ENCODE measurements at regions of chr20 and their contacts with region 1.

Region 1: DNA sequence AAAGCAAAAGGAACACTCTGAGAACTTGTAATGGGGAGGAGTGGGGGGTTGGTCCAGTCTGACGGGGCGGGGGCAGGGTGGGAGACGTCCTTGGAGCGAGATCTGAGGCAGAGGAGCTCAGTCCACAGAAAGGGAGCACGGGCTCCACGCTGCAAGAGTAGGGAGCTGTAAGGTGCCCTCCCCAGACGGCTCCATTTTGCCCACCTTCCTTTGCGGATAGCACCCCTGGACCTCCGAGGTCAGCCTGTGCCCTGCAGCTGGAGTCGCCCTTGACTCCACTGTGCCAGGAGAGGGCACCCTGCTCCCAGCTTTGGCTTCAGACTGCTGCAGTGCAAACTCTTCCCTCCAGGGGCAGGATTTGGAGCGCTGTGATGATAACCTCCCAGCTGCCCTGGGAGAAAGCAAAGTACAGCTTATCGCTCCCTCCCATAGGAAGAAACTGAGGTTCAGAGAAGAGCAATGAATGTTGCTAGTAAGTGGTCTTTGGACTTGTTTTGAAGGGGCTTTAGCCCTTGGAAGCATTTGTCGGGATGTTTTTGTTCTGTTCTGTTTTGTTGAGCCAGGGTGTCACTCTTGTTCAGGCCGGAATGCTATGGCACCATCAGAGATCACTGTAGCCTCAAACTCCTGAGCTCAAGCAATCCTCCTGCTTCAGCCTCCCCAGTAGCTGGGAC is 9.5 kb upstream of the AHCY start:
- DNase-seq: peak; percentile 91
- H3K4me3 Mint-ChIP-seq: peak overlapping the region; percentile 17
- H3K27ac Mint-ChIP-seq: no peak overlapping the region
- H3K4me1 Mint-ChIP-seq: peaks cover 17% of the 10 kb centered on the region
- H3K27me3 Mint-ChIP-seq: peaks cover 24% of the 10 kb centered on the region

Region 2: GRCh38 chr20:34129518-34130162 is 183.0 kb before region 1 on chr20:
- CTCF ChIA-PET with region 1: no interaction called
- POLR2A ChIA-PET with region 1: no interaction called
- DNase-seq: peak; percentile 74
- H3K4me3 Mint-ChIP-seq: no peak overlapping the region
- H3K27ac Mint-ChIP-seq: no peak overlapping the region
- H3K4me1 Mint-ChIP-seq: peaks cover 12% of the 10 kb centered on the region
- H3K27me3 Mint-ChIP-seq: peaks cover 24% of the 10 kb centered on the region

Region 3: GRCh38 chr20:34363062-34363464 is 50.4 kb after region 1 on chr20 and contains the start of gene ITCH:
- CTCF ChIA-PET with region 1: interaction called, 21 read pairs
- POLR2A ChIA-PET with region 1: no interaction called
- DNase-seq: peak; percentile 95
- H3K4me3 Mint-ChIP-seq: peak within 1 kb of the TSS; percentile 91
- H3K27ac Mint-ChIP-seq: peak within 1 kb of the TSS; percentile 96
- H3K4me1 Mint-ChIP-seq: peaks cover 44% of the 10 kb centered on the region
- H3K27me3 Mint-ChIP-seq: no peaks in the 10 kb centered on the region
- total RNA-seq, gene ITCH: 46.9 to 48.5 TPM

Region 4: GRCh38 chr20:34452281-34452982 is 139.8 kb after region 1 on chr20:
- CTCF ChIA-PET with region 1: interaction called, 12 read pairs
- POLR2A ChIA-PET with region 1: no interaction called
- DNase-seq: no peak
- H3K4me3 Mint-ChIP-seq: no peak overlapping the region
- H3K27ac Mint-ChIP-seq: peak overlapping the region; percentile 12
- H3K4me1 Mint-ChIP-seq: peaks cover 2% of the 10 kb centered on the region
- H3K27me3 Mint-ChIP-seq: no peaks in the 10 kb centered on the region

Region 5: GRCh38 chr20:34516247-34517113 is 203.8 kb after region 1 on chr20 and contains the start of gene DYNLRB1:
- CTCF ChIA-PET with region 1: interaction called, 36 read pairs
- POLR2A ChIA-PET with region 1: no interaction called
- DNase-seq: peak; percentile 97
- H3K4me3 Mint-ChIP-seq: peak within 1 kb of the TSS; percentile 97
- H3K27ac Mint-ChIP-seq: peak within 1 kb of the TSS; percentile 94
- H3K4me1 Mint-ChIP-seq: peaks cover 30% of the 10 kb centered on the region
- H3K27me3 Mint-ChIP-seq: no peaks in the 10 kb centered on the region
- total RNA-seq, gene DYNLRB1: 90.5 to 105 TPM

Region 6: GRCh38 chr20:34528921-34529297 is 216.2 kb after region 1 on chr20:
- CTCF ChIA-PET with region 1: interaction called, 23 read pairs
- POLR2A ChIA-PET with region 1: no interaction called
- DNase-seq: no peak
- H3K4me3 Mint-ChIP-seq: no peak overlapping the region
- H3K27ac Mint-ChIP-seq: no peak overlapping the region
- H3K4me1 Mint-ChIP-seq: peaks cover 4% of the 10 kb centered on the region
- H3K27me3 Mint-ChIP-seq: no peaks in the 10 kb centered on the region

Region 7: GRCh38 chr20:34768096-34768495 is 455.4 kb after region 1 on chr20:
- CTCF ChIA-PET with region 1: interaction called, 27 read pairs
- POLR2A ChIA-PET with region 1: no interaction called
- DNase-seq: no peak
- H3K4me3 Mint-ChIP-seq: no peak overlapping the region
- H3K27ac Mint-ChIP-seq: no peak overlapping the region
- H3K4me1 Mint-ChIP-seq: no peaks in the 10 kb centered on the region
- H3K27me3 Mint-ChIP-seq: no peaks in the 10 kb centered on the region